ENCODE measurements at regions of chr19 and their contacts with region 1.

Region 1: GRCh38 chr19:19010551-19010950 is 22.8 kb downstream of the SUGP2 start:
- DNase-seq: no peak
- H3K4me3 ChIP-seq: no peak overlapping the region
- H3K27ac ChIP-seq: no peak overlapping the region
- H3K4me1 ChIP-seq: no peaks in the 10 kb centered on the region
- H3K27me3 ChIP-seq: no peaks in the 10 kb centered on the region
- CTCF ChIP-seq: no peak

Region 2: GRCh38 chr19:19098703-19099632 is 88.4 kb after region 1 on chr19:
- CTCF ChIA-PET with region 1: no interaction called
- dilution Hi-C with region 1: loop called (anchors 5 kb)
- in situ Hi-C with region 1: no loop called
- intact Hi-C with region 1: no loop called
- DNase-seq: no peak
- H3K4me3 ChIP-seq: no peak overlapping the region
- H3K27ac ChIP-seq: no peak overlapping the region
- H3K4me1 ChIP-seq: no peaks in the 10 kb centered on the region
- H3K27me3 ChIP-seq: no peaks in the 10 kb centered on the region
- CTCF ChIP-seq: no peak